K562 (cell line): ENCODE measurements at regions of chr14 and their contacts with region 1.

Region 1: DNA sequence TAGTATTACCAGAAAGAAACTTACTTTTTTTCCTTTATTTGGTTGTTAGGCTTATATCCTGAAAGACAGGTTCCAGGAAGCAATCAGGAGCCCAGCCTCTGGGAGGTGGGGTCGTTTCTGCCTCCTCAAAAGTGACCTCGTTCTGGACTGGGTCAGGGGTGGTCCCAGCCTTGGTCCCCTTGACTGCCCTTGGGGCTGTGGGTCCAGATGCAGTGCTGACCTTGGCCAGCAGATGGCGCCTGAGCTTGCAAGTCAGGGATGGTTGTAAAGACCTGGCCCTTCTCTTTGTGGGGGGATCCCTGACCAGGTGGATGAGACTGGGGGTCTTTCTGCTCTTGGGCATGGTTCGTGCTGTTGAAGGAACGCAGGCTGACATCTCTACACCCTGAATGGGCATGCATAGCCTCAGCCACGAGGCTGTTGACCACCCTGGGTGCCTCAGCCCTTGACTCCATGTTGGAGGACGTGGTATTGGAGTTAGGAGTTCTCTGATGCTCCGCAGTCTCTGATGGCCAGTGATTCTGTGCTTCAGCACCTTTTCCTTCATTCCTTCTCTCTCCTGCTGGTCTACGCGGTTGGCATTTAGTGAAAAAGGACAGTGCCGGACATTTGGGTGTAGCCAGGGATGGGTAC is 62.4 kb downstream of the ADCK1 start:
- DNase-seq: peak; percentile 76 to 79 (median 78)
- ATAC-seq: peak; percentile 85
- H3K4me3 ChIP-seq: no peak overlapping the region
- H3K27ac ChIP-seq: no peak overlapping the region
- H3K4me1 ChIP-seq: peaks cover 43 to 55% of the 10 kb centered on the region in 2 experiments
- H3K27me3 ChIP-seq: no peaks in the 10 kb centered on the region
- CTCF ChIP-seq: peak; percentile 75 to 91 (median 83)
- EP300 ChIP-seq: no peak
- POLR2A ChIP-seq: no peak
- RAD21 ChIP-seq: peak; percentile 86 to 91

Region 2: DNA sequence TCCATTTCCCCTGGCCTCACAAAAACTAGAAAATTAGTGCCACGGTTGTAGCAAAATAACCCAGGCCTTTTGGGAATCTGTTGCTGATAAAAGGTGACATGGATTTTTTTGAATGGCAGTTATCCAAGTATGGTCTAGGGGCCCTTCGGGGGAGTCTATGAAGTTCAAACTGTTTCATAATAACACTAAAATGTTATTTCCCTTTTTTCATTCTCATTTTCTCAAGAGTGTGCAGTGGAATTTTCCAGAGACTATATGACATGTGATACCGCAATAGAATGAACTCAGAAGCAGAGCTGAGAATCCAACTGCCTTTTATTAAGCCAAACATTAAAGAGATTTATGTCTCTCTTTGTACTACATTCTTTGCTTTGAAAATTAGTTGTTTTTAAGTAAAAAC is 514.5 kb before region 1 on chr14:
- CTCF ChIA-PET with region 1: no interaction called
- POLR2A ChIA-PET with region 1: no interaction called
- in situ Hi-C with region 1: no loop called
- intact Hi-C with region 1: no loop called
- DNase-seq: no peak
- ATAC-seq: no peak
- H3K4me3 ChIP-seq: no peak overlapping the region
- H3K27ac ChIP-seq: no peak overlapping the region
- H3K4me1 ChIP-seq: peaks cover 0 to 9% of the 10 kb centered on the region in 2 experiments; a peak in 3 of 5 replicates
- H3K27me3 ChIP-seq: no peaks in the 10 kb centered on the region
- CTCF ChIP-seq: no peak
- EP300 ChIP-seq: no peak
- POLR2A ChIP-seq: no peak
- RAD21 ChIP-seq: no peak

Region 3: DNA sequence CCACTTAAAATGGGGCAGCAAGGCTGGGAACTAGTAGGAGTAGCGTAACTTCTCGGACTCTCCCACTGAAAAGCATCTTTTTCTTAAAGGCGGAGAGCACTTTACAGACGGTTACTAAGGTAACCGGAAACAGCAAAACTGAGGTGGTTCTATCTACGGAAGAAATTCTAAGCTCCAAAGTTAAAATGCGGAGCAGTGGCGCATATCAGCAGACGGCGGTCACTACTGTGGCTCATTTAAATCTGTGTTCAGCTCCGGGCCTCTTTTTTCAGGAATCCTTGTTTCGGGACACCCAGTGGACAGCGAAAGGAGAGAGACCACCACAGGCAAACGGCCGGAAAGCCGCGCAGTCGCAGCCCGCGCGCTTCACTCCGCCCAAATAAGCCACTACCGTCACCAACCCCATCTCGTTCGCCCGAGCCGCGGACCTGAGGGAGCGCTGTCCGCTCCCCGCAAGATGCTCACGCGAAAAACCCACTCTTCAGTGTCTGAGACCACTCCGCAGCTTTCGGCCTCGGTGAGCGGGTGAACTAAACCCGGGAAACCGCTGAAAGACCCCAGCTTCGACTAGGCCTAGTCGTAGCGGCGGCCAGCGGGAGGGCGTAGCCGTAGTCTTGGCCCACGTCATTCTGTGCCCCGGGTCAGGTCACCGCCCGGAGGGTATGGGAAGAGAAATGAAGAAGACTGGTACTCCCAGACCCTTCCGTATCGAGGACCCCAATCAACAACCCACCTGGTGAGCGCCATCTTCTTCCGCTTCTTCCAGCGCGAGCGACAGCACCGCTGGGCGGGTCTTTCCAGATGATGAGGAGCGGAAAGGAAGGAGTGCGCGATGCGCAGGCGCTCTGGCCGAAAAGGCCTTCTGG is 101.7 kb before region 1 on chr14 and contains the start of gene SNW1:
- CTCF ChIA-PET with region 1: no interaction called
- POLR2A ChIA-PET with region 1: no interaction called
- in situ Hi-C with region 1: no loop called
- intact Hi-C with region 1: loop called (anchors 2 kb)
- DNase-seq: peak; percentile 83 to 94 (median 86)
- ATAC-seq: peak; percentile 94
- H3K4me3 ChIP-seq: peak within 1 kb of the TSS; percentile 79
- H3K27ac ChIP-seq: peak within 1 kb of the TSS; percentile 89
- H3K4me1 ChIP-seq: peaks cover 3 to 4% of the 10 kb centered on the region in 2 experiments; a peak in 3 of 5 replicates
- H3K27me3 ChIP-seq: no peaks in the 10 kb centered on the region
- CTCF ChIP-seq: no peak
- EP300 ChIP-seq: no peak
- POLR2A ChIP-seq: peak; percentile 84
- RAD21 ChIP-seq: no peak
- polyA plus RNA-seq, gene SNW1: 79.0 to 143 TPM

Region 4: GRCh38 chr14:77965919-77966435 is 103.7 kb after region 1 on chr14:
- CTCF ChIA-PET with region 1: no interaction called
- POLR2A ChIA-PET with region 1: no interaction called
- in situ Hi-C with region 1: loop called (anchors 5 kb)
- intact Hi-C with region 1: loop called (anchors 1 kb)
- DNase-seq: peak; percentile 20 to 27 (median 22)
- ATAC-seq: peak; percentile 63
- H3K4me3 ChIP-seq: no peak overlapping the region
- H3K27ac ChIP-seq: peak overlapping the region; percentile 3; the same call in 1 of the 3 replicates
- H3K4me1 ChIP-seq: peaks cover 11 to 17% of the 10 kb centered on the region in 2 experiments; a peak in 4 of 5 replicates
- H3K27me3 ChIP-seq: no peaks in the 10 kb centered on the region
- CTCF ChIP-seq: no peak
- EP300 ChIP-seq: no peak
- POLR2A ChIP-seq: no peak
- RAD21 ChIP-seq: no peak

Region 5: GRCh38 chr14:77991128-77991772 is 129.0 kb after region 1 on chr14:
- CTCF ChIA-PET with region 1: interaction called, 7 read pairs
- POLR2A ChIA-PET with region 1: no interaction called
- in situ Hi-C with region 1: no loop called
- intact Hi-C with region 1: loop called (anchors 1 kb)
- DNase-seq: peak in 2 of 4 experiments; percentile 28 to 41
- ATAC-seq: peak; percentile 87
- H3K4me3 ChIP-seq: no peak overlapping the region
- H3K27ac ChIP-seq: no peak overlapping the region
- H3K4me1 ChIP-seq: no peaks in the 10 kb centered on the region; a peak in 1 of 5 replicates
- H3K27me3 ChIP-seq: no peaks in the 10 kb centered on the region
- CTCF ChIP-seq: peak; percentile 37 to 60 (median 42); a peak in 5 of 6 replicates
- EP300 ChIP-seq: no peak
- POLR2A ChIP-seq: no peak
- RAD21 ChIP-seq: peak in 1 of 2 experiments; percentile 59; a peak in 2 of 4 replicates